ENCODE measurements at regions of chr14 and their contacts with region 1.

Region 1: DNA sequence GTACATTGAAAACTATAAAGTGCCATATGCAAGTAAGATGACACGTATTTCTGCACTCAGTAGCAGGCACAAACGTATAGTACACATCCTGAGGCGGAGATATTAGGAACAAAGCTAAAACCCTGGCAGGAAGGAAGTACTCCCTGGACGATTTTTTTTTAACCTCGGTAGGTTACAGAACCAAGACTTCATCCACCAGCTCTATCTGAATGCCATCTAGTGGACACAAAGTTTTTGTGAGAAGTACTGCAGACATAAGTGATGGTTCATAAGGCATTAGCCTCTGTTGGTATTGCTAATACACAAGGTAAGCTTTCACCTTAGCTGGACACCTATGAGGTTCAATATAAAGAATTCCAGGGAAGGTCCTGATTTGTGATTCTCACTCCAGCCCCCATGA is 83.0 kb upstream of the CCDC196 start:
- DNase-seq: no peak
- H3K4me3 ChIP-seq: no peak overlapping the region
- H3K27me3 ChIP-seq: no peaks in the 10 kb centered on the region
- CTCF ChIP-seq: peak; percentile 40

Region 2: GRCh38 chr14:66284346-66284745 is 118.8 kb before region 1 on chr14:
- CTCF ChIA-PET with region 1: no interaction called
- POLR2A ChIA-PET with region 1: no interaction called
- DNase-seq: no peak
- H3K4me3 ChIP-seq: no peak overlapping the region
- H3K27me3 ChIP-seq: no peaks in the 10 kb centered on the region
- CTCF ChIP-seq: no peak

Region 3: DNA sequence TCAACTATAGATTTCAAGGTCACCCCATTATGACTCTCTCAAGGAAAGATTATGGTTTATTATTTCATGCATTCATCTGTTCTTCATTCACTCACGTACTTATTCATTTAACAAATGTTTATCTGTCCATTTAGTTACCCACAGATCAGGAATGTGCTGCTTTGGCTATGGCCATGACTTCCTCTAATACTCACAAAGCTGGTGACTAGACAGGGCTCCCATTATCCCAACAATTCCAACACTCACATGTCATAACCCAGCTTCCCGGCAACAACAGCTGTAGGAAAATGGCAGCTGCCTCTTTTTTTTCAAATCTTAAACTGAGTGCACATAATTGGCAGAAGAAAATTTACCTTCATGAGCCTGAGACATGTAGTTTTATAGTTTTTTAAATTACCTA is 107.8 kb before region 1 on chr14:
- CTCF ChIA-PET with region 1: no interaction called
- POLR2A ChIA-PET with region 1: no interaction called
- DNase-seq: no peak
- H3K4me3 ChIP-seq: no peak overlapping the region
- H3K27me3 ChIP-seq: no peaks in the 10 kb centered on the region
- CTCF ChIP-seq: no peak

Region 4: DNA sequence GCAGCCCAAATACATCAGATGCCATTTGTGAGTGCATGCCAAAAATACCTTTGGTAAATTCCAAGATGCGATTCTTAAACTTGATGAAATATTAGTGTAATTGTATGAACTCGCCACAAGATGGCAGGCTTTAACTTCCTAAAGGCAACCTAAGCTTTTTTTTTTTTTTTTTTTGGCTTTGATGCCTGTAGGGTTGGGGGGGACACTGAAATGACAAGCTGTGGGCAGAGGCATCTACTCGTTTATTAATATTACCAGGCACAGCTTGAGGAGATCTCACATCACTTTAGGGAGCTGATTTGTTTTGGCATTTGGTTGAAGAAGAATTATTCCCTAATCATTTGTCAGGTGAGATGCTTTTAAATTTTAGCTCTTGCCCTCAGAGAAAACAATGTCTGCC is 43.7 kb before region 1 on chr14:
- CTCF ChIA-PET with region 1: interaction called, 11 read pairs
- POLR2A ChIA-PET with region 1: no interaction called
- DNase-seq: no peak
- H3K4me3 ChIP-seq: no peak overlapping the region
- H3K27me3 ChIP-seq: no peaks in the 10 kb centered on the region; the same call in 1 of the 2 replicates
- CTCF ChIP-seq: peak; percentile 61

Measured in BJ (cell line).